AG04449 (cell line): ENCODE measurements at regions of chr12 and their contacts with region 1.

Region 1: DNA sequence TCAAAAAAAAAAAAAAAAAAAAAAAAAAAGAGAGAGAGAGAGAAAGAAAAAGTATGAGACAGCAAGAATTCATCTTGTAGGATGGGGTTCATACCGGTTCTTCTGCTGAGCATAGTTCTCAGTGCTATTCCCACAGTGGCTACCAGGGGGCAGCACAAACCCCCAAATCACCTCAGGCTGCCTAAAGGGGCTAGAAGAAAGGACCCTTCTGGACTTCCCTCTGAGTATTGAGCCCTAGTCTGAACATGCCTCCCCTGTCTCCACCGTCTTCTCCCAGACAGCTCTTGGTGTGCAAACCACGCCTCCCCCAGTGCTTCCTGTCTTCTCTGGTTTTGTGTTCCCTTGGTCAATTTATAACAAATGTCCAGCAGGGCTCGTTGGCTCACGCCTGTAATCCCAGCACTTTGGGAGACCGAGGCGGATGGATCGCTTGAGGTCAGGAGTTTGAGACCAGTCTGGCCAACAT is 31.3 kb upstream of the SMUG1 start:
- DNase-seq: no peak
- H3K4me3 ChIP-seq: no peak overlapping the region
- CTCF ChIP-seq: peak; percentile 77

Region 2: GRCh38 chr12:54147186-54147585 is 72.9 kb before region 1 on chr12:
- CTCF ChIA-PET with region 1: no interaction called
- POLR2A ChIA-PET with region 1: no interaction called
- DNase-seq: no peak
- H3K4me3 ChIP-seq: no peak overlapping the region
- CTCF ChIP-seq: no peak

Region 3: GRCh38 chr12:54240971-54241588 is 21.0 kb after region 1 on chr12:
- CTCF ChIA-PET with region 1: interaction called, 14 read pairs
- POLR2A ChIA-PET with region 1: no interaction called
- DNase-seq: no peak
- H3K4me3 ChIP-seq: no peak overlapping the region
- CTCF ChIP-seq: no peak